Heart right ventricle (tissue), 16 donors: ENCODE measurements at regions of chr13 and their contacts with region 1.

Region 1: DNA sequence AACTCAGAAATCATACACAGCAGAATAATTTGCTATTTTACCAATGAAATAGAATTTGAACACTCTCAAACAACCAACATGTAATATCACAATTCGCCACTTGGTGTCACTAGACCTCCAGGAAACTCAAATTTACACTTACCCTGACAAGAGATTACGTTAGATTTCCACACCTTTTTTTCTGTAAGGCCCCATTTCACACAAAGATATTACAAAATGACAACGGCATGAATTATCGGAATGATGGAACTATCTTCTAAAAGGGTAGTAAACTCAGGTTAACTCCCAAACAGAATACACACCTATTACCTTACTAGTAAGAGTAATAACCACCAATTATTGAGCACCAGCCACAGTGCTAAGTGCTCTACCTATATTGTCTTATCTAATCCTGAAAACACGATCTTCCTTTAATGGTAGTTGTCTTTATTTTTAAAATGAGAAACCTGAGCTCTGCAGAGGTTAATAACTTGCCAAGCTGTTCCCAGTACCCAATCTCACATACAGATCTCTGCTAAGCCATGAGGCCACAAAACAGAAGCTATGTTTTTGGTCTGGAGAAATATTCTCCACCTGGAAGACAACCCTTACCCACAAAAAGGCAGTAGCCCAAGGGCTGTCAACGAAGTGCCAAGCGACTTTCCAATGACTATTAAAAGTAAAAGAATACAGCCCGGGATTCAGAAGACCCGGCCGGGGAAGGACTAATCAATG is 152.4 kb downstream of the DCLK1 start:
- DNase-seq: peak in 1 of 2 donors; percentile 57
- ATAC-seq: peak in 6 of 8 donors; percentile 13 to 71 (median 59)
- H3K4me3 ChIP-seq: peak overlapping the region in 2 of 10 donors; percentile 7 to 8
- H3K27ac ChIP-seq: peak overlapping the region in 8 of 10 donors; percentile 5 to 77 (median 59)
- H3K4me1 ChIP-seq: peaks cover 0 to 15% (median 7%) of the 10 kb centered on the region in 9 donors
- H3K27me3 ChIP-seq: no peaks in the 10 kb centered on the region
- CTCF ChIP-seq: peak; percentile 72 to 90 (median 84)

Region 2: GRCh38 chr13:36131222-36131930 is 152.6 kb after region 1 on chr13 and contains the start of gene DCLK1:
- intact Hi-C with region 1: loop called in 2 of 10 experiments (anchors 10 kb)
- DNase-seq: peak; percentile 54 to 79
- ATAC-seq: peak; percentile 75 to 93 (median 81)
- H3K4me3 ChIP-seq: peak within 1 kb of the TSS; percentile 18 to 80 (median 60)
- H3K27ac ChIP-seq: peak within 1 kb of the TSS in 9 of 10 donors; percentile 19 to 77 (median 56)
- H3K4me1 ChIP-seq: peaks cover 0 to 30% (median 7%) of the 10 kb centered on the region in 9 donors
- H3K27me3 ChIP-seq: peaks cover 0 to 24% (median 0%) of the 10 kb centered on the region in 7 donors
- CTCF ChIP-seq: peak in 1 of 9 donors; percentile 8
- total RNA-seq, gene DCLK1: 5.8 to 16.9 (median 10.4) TPM

Region 3: GRCh38 chr13:36207672-36208071 is 228.9 kb after region 1 on chr13:
- intact Hi-C with region 1: loop called in 1 of 10 experiments (anchors 5 kb)
- DNase-seq: no peak
- ATAC-seq: no peak
- H3K4me3 ChIP-seq: no peak overlapping the region
- H3K27ac ChIP-seq: no peak overlapping the region
- H3K4me1 ChIP-seq: no peaks in the 10 kb centered on the region
- H3K27me3 ChIP-seq: no peaks in the 10 kb centered on the region
- CTCF ChIP-seq: peak in 4 of 9 donors; percentile 5 to 35 (median 18)

Region 4: DNA sequence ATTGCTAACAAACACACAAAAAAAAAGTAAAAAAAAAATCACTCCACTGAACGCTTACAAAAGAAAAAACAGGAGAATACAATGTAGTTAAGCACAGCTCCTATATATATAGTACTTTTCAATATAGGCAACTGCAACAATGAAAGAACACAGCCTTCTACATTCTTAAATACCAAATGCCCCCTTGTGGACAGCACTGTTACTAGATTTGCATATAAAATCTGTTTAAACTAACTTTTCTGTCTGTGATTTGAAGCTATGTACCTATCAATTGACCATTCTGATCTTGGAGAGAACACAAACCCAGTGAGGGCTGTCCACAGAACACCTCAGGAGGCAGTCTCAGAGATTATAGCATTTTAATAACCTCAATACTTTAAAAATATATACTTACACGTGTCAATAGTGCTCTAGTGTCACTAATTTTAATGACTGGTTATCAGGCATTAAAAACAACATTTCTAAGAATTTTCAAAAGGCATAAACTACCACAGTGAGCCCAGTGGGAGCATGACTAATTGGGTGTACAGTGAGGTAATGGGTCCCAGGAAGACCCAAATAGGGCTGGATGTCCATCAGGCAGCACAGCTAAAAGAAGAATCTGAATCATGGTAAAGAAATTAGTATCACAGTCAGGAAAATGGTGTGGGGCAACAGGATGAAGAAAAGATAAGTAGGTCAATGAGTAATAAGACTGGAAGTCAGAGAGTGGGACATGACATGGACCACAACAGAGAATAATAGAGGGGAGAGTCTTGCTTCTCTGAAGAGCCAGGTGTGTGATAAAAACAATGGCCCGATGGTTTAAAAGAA is 296.6 kb after region 1 on chr13:
- intact Hi-C with region 1: loop called (anchors 1 to 5 kb)
- DNase-seq: peak in 1 of 2 donors; percentile 48
- ATAC-seq: peak in 3 of 8 donors; percentile 54 to 60 (median 55)
- H3K4me3 ChIP-seq: no peak overlapping the region
- H3K27ac ChIP-seq: no peak overlapping the region
- H3K4me1 ChIP-seq: no peaks in the 10 kb centered on the region
- H3K27me3 ChIP-seq: no peaks in the 10 kb centered on the region
- CTCF ChIP-seq: peak; percentile 25 to 82 (median 63)

Region 5: GRCh38 chr13:36395280-36395679 is 416.5 kb after region 1 on chr13:
- intact Hi-C with region 1: no loop called
- DNase-seq: no peak
- ATAC-seq: peak in 4 of 8 donors; percentile 33 to 74 (median 67)
- H3K4me3 ChIP-seq: no peak overlapping the region
- H3K27ac ChIP-seq: no peak overlapping the region
- H3K4me1 ChIP-seq: no peaks in the 10 kb centered on the region
- H3K27me3 ChIP-seq: peaks cover 0 to 6% (median 0%) of the 10 kb centered on the region in 7 donors
- CTCF ChIP-seq: peak in 8 of 9 donors; percentile 24 to 56 (median 50)